Breast epithelium (tissue), 4 donors: ENCODE measurements at regions of chr7 and their contacts with region 1.

Region 1: GRCh38 chr7:154231732-154232131 is 179.5 kb downstream of the DPP6 start:
- DNase-seq: no peak
- H3K4me3 ChIP-seq: no peak overlapping the region
- H3K27ac ChIP-seq: no peak overlapping the region
- H3K4me1 ChIP-seq: no peaks in the 10 kb centered on the region
- H3K27me3 ChIP-seq: no peaks in the 10 kb centered on the region
- CTCF ChIP-seq: no peak
- POLR2A ChIP-seq: no peak

Region 2: GRCh38 chr7:154167807-154168206 is 63.9 kb before region 1 on chr7:
- intact Hi-C with region 1: loop called (anchors 2 kb)
- DNase-seq: no peak
- H3K4me3 ChIP-seq: no peak overlapping the region
- H3K27ac ChIP-seq: no peak overlapping the region
- H3K4me1 ChIP-seq: no peaks in the 10 kb centered on the region
- H3K27me3 ChIP-seq: no peaks in the 10 kb centered on the region
- CTCF ChIP-seq: no peak
- POLR2A ChIP-seq: no peak